ENCODE measurements at regions of chr3 and their contacts with region 1.

Region 1: GRCh38 chr3:49276475-49277382 is at the start of gene C3orf62:
- DNase-seq: peak; percentile 95
- H3K4me3 ChIP-seq: peak within 1 kb of the TSS; percentile 70
- H3K27ac ChIP-seq: peak within 1 kb of the TSS; percentile 99
- H3K4me1 ChIP-seq: peaks cover 44% of the 10 kb centered on the region
- H3K27me3 ChIP-seq: no peaks in the 10 kb centered on the region
- CTCF ChIP-seq: no peak
- total RNA-seq, gene C3orf62: 2.8 TPM

Region 2: GRCh38 chr3:49171119-49171774 is 105.5 kb before region 1 on chr3 and contains the start of gene KLHDC8B:
- intact Hi-C with region 1: loop called (anchors 10 kb)
- DNase-seq: peak; percentile 90
- H3K4me3 ChIP-seq: peak within 1 kb of the TSS; percentile 84
- H3K27ac ChIP-seq: peak within 1 kb of the TSS; percentile 94
- H3K4me1 ChIP-seq: peaks cover 70% of the 10 kb centered on the region
- H3K27me3 ChIP-seq: no peaks in the 10 kb centered on the region
- CTCF ChIP-seq: peak; percentile 98
- total RNA-seq, gene KLHDC8B: 92.5 TPM

Region 3: GRCh38 chr3:49616491-49616941 is 339.8 kb after region 1 on chr3:
- intact Hi-C with region 1: no loop called
- DNase-seq: no peak
- H3K4me3 ChIP-seq: no peak overlapping the region
- H3K27ac ChIP-seq: no peak overlapping the region
- H3K4me1 ChIP-seq: no peaks in the 10 kb centered on the region
- H3K27me3 ChIP-seq: no peaks in the 10 kb centered on the region
- CTCF ChIP-seq: no peak